Activated CD8-positive, alpha-beta T cell treated with anti-CD3 and anti-CD28 coated beads for 36 hours (primary cell): ENCODE measurements at regions of chr6 and their contacts with region 1.

Region 1: GRCh38 chr6:37018198-37019064 is 13.0 kb downstream of the FGD2 start:
- DNase-seq: peak; percentile 96
- ATAC-seq: peak; percentile 95
- H3K4me3 Mint-ChIP-seq: peak overlapping the region; percentile 26
- H3K27ac Mint-ChIP-seq: peak overlapping the region; percentile 66
- H3K4me1 Mint-ChIP-seq: peaks cover 40% of the 10 kb centered on the region
- H3K27me3 Mint-ChIP-seq: no peaks in the 10 kb centered on the region
- CTCF ChIP-seq: peak; percentile 99

Region 2: GRCh38 chr6:36759148-36759759 is 259.2 kb before region 1 on chr6:
- CTCF ChIA-PET with region 1: interaction called, 126 read pairs
- POLR2A ChIA-PET with region 1: no interaction called
- intact Hi-C with region 1: no loop called
- DNase-seq: peak; percentile 82
- ATAC-seq: peak; percentile 45
- H3K4me3 Mint-ChIP-seq: no peak overlapping the region
- H3K27ac Mint-ChIP-seq: no peak overlapping the region
- H3K4me1 Mint-ChIP-seq: peaks cover 38% of the 10 kb centered on the region
- H3K27me3 Mint-ChIP-seq: no peaks in the 10 kb centered on the region
- CTCF ChIP-seq: peak; percentile 92

Region 3: DNA sequence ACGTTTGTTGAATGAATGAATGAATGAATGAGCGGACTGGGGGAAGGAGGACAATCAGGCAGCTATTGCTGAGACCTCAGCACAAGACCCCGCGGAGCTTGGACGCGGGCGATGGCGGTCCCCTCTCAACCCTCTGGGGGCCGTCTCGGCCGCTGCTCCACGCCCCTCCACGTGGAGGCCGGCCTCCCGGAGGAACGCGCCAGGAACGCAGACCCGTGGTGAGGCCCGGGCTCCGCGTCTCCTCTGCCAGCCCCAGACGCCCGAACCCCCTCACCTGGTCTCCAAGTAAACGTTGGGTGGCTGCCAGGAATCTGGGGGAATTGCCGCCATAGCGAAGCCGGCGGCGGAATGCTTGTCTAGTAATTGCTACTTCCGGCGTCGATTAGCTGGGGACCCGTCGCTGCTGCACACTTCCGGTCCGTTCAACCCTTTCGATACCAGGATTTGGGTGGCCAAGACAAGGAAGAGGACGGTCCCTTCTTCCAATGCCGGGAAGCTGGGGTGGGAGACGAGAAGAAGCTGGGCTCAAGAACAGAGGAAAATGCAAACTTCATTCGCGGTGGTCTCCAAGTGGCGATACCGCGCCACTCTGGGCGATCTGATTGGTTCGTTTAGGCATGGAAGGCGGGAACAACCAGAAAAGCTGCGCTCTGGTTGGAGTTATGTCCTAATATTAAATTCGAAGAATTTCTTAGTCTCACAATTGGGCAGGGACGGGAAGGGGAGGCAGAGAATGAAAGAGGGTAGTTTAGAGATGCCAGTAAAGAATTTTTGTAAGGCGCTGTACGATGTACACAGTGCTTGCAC is 143.8 kb before region 1 on chr6 and contains the start of gene PPIL1:
- CTCF ChIA-PET with region 1: interaction called, 108 read pairs
- POLR2A ChIA-PET with region 1: interaction called, 11 read pairs
- intact Hi-C with region 1: no loop called
- DNase-seq: peak; percentile 88
- ATAC-seq: peak; percentile 91
- H3K4me3 Mint-ChIP-seq: peak within 1 kb of the TSS; percentile 99
- H3K27ac Mint-ChIP-seq: peak within 1 kb of the TSS; percentile 100
- H3K4me1 Mint-ChIP-seq: peaks cover 42% of the 10 kb centered on the region
- H3K27me3 Mint-ChIP-seq: peaks cover 5% of the 10 kb centered on the region
- CTCF ChIP-seq: no peak
- total RNA-seq, gene PPIL1: 34.5 to 35.6 TPM

Region 4: DNA sequence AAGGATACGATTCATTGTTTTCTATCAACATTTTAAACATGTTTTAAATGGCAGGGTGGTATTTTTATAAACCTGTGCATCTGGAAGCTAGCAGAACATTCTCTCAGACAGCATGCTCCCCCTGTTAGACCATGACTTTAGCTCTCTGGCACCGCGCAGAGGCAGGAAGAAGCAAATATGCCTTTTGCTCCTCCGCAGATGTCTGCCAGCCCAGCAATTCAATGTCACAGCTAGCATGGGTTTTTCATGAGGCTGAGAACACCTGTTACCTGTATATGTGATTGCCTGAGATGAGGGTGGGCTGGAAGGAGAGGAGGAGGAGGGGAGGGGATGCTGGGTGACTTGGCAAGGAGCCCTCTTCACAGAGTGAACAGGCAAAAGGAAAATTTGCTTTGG is 39.1 kb before region 1 on chr6:
- CTCF ChIA-PET with region 1: interaction called, 16 read pairs
- POLR2A ChIA-PET with region 1: interaction called, 4 read pairs
- intact Hi-C with region 1: no loop called
- DNase-seq: peak; percentile 50
- ATAC-seq: peak; percentile 70
- H3K4me3 Mint-ChIP-seq: no peak overlapping the region
- H3K27ac Mint-ChIP-seq: peak overlapping the region; percentile 22
- H3K4me1 Mint-ChIP-seq: peaks cover 26% of the 10 kb centered on the region
- H3K27me3 Mint-ChIP-seq: no peaks in the 10 kb centered on the region
- CTCF ChIP-seq: peak; percentile 37

Region 5: DNA sequence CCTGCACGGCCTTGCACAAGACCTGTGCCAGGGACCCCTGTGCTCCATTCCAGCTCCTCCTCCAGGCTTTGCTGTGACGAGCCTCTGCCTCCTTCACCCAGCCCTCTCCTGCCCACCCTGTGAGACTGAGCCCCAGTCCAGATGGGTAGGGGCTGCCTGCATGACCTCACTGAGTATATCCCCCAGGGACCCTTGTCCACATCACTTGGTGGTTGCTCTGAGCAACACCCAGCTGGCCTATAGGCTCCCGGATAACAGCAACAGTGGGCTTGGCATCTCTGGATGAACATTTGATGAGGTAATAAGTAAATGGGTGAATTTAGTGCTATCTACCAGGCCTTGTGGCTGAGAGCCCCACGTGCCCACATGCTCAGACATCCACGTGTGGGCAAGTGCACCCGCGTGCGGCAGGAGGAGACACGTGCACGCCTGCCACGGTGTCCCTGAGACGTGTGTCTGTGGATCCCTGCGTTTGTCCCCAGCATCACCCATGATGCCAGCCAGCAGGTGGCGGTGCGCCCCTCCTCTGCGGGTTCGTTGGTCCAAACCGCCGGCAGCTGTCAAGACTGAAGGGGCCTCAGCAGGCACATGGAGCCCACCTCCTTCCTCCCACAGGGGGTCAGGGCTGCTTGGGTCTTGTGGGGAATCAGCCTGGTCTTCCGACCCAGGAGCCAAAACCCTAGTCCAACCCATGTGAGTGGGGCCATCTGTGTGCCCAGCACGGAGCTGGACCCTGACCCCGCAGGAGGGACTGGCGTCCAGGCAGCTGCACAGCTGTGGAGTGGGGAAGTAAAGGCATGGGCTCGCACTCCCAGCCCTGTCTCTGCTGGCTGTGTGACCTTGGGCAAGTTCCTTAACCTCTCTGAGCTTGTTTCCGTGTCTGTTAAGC is 33.0 kb after region 1 on chr6:
- CTCF ChIA-PET with region 1: interaction called, 405 read pairs
- POLR2A ChIA-PET with region 1: interaction called, 10 read pairs
- intact Hi-C with region 1: no loop called
- DNase-seq: peak; percentile 95
- ATAC-seq: peak; percentile 47
- H3K4me3 Mint-ChIP-seq: peak overlapping the region; percentile 83
- H3K27ac Mint-ChIP-seq: peak overlapping the region; percentile 99
- H3K4me1 Mint-ChIP-seq: peaks cover 56% of the 10 kb centered on the region
- H3K27me3 Mint-ChIP-seq: no peaks in the 10 kb centered on the region
- CTCF ChIP-seq: peak; percentile 84

Region 6: GRCh38 chr6:37222125-37222967 is 203.9 kb after region 1 on chr6:
- CTCF ChIA-PET with region 1: interaction called, 784 read pairs
- POLR2A ChIA-PET with region 1: interaction called, 3 read pairs
- intact Hi-C with region 1: no loop called
- DNase-seq: peak; percentile 88
- ATAC-seq: peak; percentile 98
- H3K4me3 Mint-ChIP-seq: peak overlapping the region; percentile 68
- H3K27ac Mint-ChIP-seq: no peak overlapping the region
- H3K4me1 Mint-ChIP-seq: peaks cover 19% of the 10 kb centered on the region
- H3K27me3 Mint-ChIP-seq: no peaks in the 10 kb centered on the region
- CTCF ChIP-seq: no peak

Region 7: GRCh38 chr6:37353761-37354525 is 335.5 kb after region 1 on chr6 and contains the start of gene RNF8:
- CTCF ChIA-PET with region 1: no interaction called
- POLR2A ChIA-PET with region 1: no interaction called
- intact Hi-C with region 1: no loop called
- DNase-seq: peak; percentile 96
- ATAC-seq: peak; percentile 99
- H3K4me3 Mint-ChIP-seq: peak within 1 kb of the TSS; percentile 90
- H3K27ac Mint-ChIP-seq: peak within 1 kb of the TSS; percentile 89
- H3K4me1 Mint-ChIP-seq: peaks cover 26% of the 10 kb centered on the region
- H3K27me3 Mint-ChIP-seq: no peaks in the 10 kb centered on the region
- CTCF ChIP-seq: no peak
- total RNA-seq, gene RNF8: 19.8 to 21.1 TPM